Activated CD4-positive, alpha-beta memory T cell treated with anti-CD3 and anti-CD28 coated beads for 36 hours (primary cell): ENCODE measurements at regions of chr13 and their contacts with region 1.

Region 1: DNA sequence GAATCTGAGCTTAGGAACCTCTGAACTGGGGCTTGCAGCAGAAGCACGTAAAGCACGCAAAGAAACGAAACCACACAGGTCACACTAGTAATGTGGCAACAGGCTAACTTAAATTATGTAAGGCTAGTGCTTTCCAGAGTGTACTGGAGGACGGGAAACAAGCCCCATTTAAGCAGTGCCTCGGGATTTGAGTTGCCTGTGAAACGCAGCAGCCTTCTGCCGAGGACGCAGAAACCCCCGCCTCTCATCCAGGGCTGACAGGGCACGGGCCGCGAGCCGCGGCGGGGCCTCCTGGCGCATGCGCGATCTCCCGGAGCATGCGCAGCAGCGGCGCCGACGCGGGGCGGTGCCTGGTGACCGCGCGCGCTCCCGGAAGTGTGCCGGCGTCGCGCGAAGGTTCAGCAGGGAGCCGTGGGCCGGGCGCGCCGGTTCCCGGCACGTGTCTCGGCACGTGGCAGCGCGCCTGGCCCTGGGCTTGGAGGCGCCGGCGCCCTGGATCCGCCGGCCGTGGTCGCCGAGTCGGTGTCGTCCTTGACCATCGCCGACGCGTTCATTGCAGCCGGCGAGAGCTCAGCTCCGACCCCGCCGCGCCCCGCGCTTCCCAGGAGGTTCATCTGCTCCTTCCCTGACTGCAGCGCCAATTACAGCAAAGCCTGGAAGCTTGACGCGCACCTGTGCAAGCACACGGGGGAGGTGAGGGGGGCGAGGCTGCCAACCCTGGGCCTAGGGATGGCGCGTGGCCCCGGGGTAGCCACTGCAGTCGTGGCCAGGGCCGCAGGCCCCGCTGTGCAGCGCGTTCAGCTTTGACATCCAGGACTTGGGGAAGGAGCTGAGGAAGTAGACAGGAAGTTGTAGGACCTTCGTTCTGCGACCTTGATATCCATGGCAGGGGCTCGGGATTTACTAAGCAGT is at the start of gene GTF3A:
- DNase-seq: peak; percentile 91
- H3K4me3 Mint-ChIP-seq: peak within 1 kb of the TSS; percentile 85
- H3K27ac Mint-ChIP-seq: peak within 1 kb of the TSS; percentile 95
- H3K4me1 Mint-ChIP-seq: peaks cover 35% of the 10 kb centered on the region
- H3K27me3 Mint-ChIP-seq: no peaks in the 10 kb centered on the region
- total RNA-seq, gene GTF3A: 217 to 218 TPM

Region 2: GRCh38 chr13:27251166-27252091 is 173.1 kb before region 1 on chr13 and contains the start of gene RPL21:
- CTCF ChIA-PET with region 1: no interaction called
- POLR2A ChIA-PET with region 1: interaction called, 3 read pairs
- intact Hi-C with region 1: loop called (anchors 1 kb)
- DNase-seq: peak; percentile 92
- H3K4me3 Mint-ChIP-seq: peak within 1 kb of the TSS; percentile 94
- H3K27ac Mint-ChIP-seq: peak within 1 kb of the TSS; percentile 95
- H3K4me1 Mint-ChIP-seq: peaks cover 48% of the 10 kb centered on the region
- H3K27me3 Mint-ChIP-seq: no peaks in the 10 kb centered on the region
- total RNA-seq, gene RPL21: 1,539 to 1,545 TPM

Region 3: GRCh38 chr13:27362064-27362883 is 62.2 kb before region 1 on chr13:
- CTCF ChIA-PET with region 1: interaction called, 19 read pairs
- POLR2A ChIA-PET with region 1: no interaction called
- intact Hi-C with region 1: no loop called
- DNase-seq: peak; percentile 85
- H3K4me3 Mint-ChIP-seq: no peak overlapping the region
- H3K27ac Mint-ChIP-seq: no peak overlapping the region
- H3K4me1 Mint-ChIP-seq: no peaks in the 10 kb centered on the region
- H3K27me3 Mint-ChIP-seq: peaks cover 22% of the 10 kb centered on the region

Region 4: DNA sequence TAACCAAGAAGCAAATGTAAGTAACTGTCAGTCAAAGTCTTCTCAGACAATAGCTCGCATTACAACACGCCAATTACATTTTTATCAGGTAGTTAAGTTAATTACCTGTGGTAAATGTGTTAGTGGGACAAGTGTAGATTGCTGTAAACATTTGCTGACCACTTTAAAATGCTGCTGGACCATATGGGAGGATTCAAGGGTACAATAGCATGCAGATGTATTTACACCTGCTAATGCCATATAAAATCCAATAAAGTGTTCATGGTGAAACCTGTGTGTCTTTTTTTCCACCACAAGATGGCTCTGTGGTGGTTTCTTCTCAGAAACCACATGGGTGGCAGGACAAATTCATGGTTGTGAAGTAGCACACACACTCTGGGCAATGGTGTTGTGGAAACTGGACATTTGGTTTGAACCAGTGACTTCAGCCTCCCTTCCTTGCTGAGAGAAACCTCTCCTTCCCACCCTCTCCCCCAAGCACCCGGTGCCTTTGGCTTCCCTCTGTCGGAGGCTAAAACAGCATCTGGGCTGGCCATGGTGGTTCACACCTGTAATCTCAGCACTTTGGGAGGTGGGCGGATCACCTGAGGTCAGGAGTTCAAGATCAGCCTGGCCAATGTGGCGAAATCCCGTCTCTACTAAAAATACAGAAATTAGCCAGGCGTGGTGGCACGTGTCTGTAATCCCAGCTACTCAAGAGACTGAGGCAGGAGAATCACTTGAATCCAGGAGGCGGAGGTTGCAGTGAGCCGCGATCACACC is 18.1 kb before region 1 on chr13:
- CTCF ChIA-PET with region 1: no interaction called
- POLR2A ChIA-PET with region 1: interaction called, 3 read pairs
- intact Hi-C with region 1: loop called (anchors 1 kb)
- DNase-seq: peak; percentile 36
- H3K4me3 Mint-ChIP-seq: no peak overlapping the region
- H3K27ac Mint-ChIP-seq: no peak overlapping the region
- H3K4me1 Mint-ChIP-seq: peaks cover 8% of the 10 kb centered on the region
- H3K27me3 Mint-ChIP-seq: peaks cover 13% of the 10 kb centered on the region

Region 5: GRCh38 chr13:27449936-27450828 is 25.7 kb after region 1 on chr13 and contains the start of gene MTIF3:
- CTCF ChIA-PET with region 1: interaction called, 43 read pairs
- POLR2A ChIA-PET with region 1: interaction called, 72 read pairs
- intact Hi-C with region 1: loop called (anchors 1 kb)
- DNase-seq: peak; percentile 97
- H3K4me3 Mint-ChIP-seq: peak within 1 kb of the TSS; percentile 90
- H3K27ac Mint-ChIP-seq: peak within 1 kb of the TSS; percentile 95
- H3K4me1 Mint-ChIP-seq: peaks cover 57% of the 10 kb centered on the region
- H3K27me3 Mint-ChIP-seq: no peaks in the 10 kb centered on the region
- total RNA-seq, gene MTIF3: 35.7 to 37.3 TPM

Region 6: DNA sequence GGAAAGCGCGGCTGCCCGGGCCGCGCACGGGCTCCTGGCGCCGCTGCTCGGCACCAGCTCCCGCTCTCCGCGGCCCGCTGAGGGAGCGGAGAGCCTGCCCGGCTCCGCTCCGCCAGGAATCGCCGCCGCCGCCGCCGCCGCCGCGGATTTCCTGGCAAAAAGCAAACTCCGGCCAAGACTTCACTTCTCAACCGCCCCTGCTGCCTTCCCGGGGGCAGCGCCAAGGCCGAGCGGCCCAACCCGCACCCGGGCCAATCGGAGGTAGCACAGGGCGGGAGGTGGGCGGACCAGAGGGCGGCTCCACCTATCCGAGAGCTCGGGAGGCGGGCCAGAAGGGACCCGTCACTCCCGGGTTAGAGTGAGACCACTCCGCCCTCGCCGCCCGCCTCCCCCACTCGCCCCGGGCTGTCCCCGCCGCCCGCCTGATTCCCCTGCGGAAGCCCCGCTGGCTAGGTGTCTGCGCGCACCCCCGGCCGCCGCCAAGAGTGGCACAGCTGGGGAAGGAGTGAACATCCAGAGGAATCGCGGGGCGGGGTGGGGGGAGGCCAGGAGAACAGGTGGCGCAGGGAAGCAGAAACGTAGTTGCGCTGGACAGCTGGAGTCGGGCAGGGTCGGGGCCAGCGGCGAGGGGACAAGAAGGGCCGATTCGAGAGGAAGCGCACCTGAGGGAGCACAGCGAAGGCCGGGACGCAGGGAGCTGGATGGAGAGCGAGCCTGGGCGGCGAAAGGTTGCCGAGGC is 196.0 kb after region 1 on chr13 and contains the start of gene LNX2:
- CTCF ChIA-PET with region 1: interaction called, 7 read pairs
- POLR2A ChIA-PET with region 1: interaction called, 7 read pairs
- intact Hi-C with region 1: loop called (anchors 1 kb)
- DNase-seq: peak; percentile 98
- H3K4me3 Mint-ChIP-seq: peak within 1 kb of the TSS; percentile 92
- H3K27ac Mint-ChIP-seq: peak within 1 kb of the TSS; percentile 88
- H3K4me1 Mint-ChIP-seq: peaks cover 54% of the 10 kb centered on the region
- H3K27me3 Mint-ChIP-seq: no peaks in the 10 kb centered on the region
- total RNA-seq, gene LNX2: 5.0 to 5.4 TPM